Activated CD8-positive, alpha-beta memory T cell treated with anti-CD3 and anti-CD28 coated beads, Interleukin-2, amount 10 ng/mL, durations not matched to agents 7 days and 5 days (primary cell): ENCODE measurements at regions of chr11 and their contacts with region 1.

Region 1: GRCh38 chr11:67317205-67317887 is 14.0 kb downstream of the SSH3 start:
- DNase-seq: peak; percentile 99
- ATAC-seq: peak; percentile 90
- H3K4me3 Mint-ChIP-seq: peak overlapping the region; percentile 90
- H3K27ac Mint-ChIP-seq: peak overlapping the region; percentile 98
- H3K4me1 Mint-ChIP-seq: peaks cover 27% of the 10 kb centered on the region
- H3K27me3 Mint-ChIP-seq: peaks cover 9% of the 10 kb centered on the region

Region 2: DNA sequence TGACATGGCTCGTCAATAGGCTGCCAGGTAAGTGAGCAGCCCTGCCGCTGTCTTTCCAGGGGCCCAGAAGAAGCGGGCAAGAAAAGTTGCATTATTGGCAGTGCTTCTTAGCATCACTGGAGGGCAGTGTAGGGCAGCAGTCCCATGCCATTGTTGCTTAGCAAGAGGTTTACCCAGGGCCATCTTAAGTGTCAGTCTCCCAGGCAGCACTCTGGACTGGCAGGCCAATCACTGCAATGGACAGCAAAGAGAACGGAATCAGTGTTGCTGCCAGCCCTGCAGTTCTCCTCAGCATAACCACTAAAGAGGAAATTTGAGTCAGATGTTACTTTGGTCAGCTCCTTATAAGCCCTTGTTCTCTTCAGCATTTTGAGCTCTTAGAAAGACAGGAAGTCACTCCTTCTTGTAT is 64.5 kb before region 1 on chr11:
- CTCF ChIA-PET with region 1: interaction called, 18 read pairs
- DNase-seq: peak; percentile 73
- ATAC-seq: peak; percentile 85
- H3K4me3 Mint-ChIP-seq: no peak overlapping the region
- H3K27ac Mint-ChIP-seq: peak overlapping the region; percentile 58
- H3K4me1 Mint-ChIP-seq: peaks cover 61% of the 10 kb centered on the region
- H3K27me3 Mint-ChIP-seq: no peaks in the 10 kb centered on the region

Region 3: DNA sequence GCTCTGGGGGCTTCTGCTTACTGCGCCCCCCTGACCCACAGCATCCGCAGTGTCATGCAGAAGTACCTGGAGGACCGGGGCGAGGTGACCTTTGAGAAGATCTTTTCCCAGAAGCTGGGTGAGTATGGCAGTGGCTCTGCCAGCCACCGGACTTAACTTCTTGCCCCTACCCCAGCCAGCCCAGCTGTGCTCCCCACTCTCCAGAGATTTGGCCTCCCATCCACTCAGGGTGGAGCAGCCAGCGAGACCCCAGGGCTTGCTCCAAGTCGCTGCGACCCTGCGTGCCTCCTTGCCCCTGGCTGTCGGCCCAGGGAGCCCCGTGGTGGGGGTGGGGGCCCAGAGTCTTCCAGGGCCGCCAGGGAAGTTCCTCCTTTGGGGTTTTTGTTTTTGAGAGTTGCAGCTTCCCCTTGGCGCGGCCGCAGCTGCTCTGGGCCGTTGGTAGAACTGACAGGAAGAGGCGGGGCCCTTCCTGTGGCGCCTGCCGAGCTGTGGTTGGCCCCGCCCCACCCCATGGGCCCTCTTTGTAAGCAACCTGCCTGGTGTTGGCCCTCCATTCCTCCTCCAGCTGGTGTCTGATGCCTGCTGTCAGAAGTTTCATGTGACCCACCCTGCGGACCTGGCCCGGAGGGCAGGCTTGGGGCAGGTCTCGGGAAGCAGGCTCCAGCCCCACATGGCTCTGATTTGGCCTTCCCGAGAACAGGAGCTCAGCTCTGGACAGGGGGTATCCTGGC is 40.0 kb before region 1 on chr11:
- CTCF ChIA-PET with region 1: interaction called, 29 read pairs
- DNase-seq: peak; percentile 95
- ATAC-seq: peak; percentile 86
- H3K4me3 Mint-ChIP-seq: peak overlapping the region; percentile 57
- H3K27ac Mint-ChIP-seq: peak overlapping the region; percentile 86
- H3K4me1 Mint-ChIP-seq: peaks cover 78% of the 10 kb centered on the region
- H3K27me3 Mint-ChIP-seq: no peaks in the 10 kb centered on the region

Region 4: DNA sequence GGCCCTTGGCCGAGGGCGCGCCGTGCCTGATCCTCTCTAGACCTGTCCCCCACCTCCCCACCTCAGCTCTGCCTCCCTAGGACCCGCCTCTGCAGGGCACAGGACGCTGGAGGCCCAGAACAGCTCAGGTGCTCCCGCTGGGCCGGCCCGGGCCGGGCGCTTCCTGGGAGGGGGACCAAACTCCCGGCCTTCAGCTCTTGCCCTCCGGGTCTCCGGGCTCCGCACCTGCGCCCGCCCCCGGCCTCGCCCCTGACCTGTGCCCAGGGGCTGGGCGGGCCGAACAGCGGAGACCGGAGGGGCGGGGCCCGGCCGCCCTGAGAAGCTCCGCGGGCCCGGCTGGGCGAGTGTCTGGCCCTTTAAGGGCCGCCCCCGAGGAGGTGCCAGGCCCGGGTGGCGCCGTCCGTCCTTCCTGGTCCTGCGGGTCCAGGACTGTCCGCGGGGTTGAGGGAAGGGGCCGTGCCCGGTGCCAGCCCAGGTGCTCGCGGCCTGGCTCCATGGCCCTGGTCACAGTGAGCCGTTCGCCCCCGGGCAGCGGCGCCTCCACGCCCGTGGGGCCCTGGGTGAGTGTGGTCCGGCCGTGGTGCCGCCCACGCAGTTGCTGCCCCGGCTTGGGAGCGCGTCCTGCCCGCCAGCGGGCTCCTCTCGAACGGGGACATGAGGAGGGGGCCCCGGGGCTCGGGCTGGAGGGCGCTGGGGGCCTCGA is 14.1 kb before region 1 on chr11 and contains the start of gene SSH3:
- CTCF ChIA-PET with region 1: interaction called, 29 read pairs
- DNase-seq: peak; percentile 67
- ATAC-seq: peak; percentile 92
- H3K4me3 Mint-ChIP-seq: peak within 1 kb of the TSS; percentile 69
- H3K27ac Mint-ChIP-seq: peak within 1 kb of the TSS; percentile 24
- H3K4me1 Mint-ChIP-seq: peaks cover 12% of the 10 kb centered on the region
- H3K27me3 Mint-ChIP-seq: no peaks in the 10 kb centered on the region
- total RNA-seq, gene SSH3: 10.7 to 26.4 TPM

Region 5: GRCh38 chr11:67382276-67383136 is 65.2 kb after region 1 on chr11:
- CTCF ChIA-PET with region 1: interaction called, 36 read pairs
- DNase-seq: peak; percentile 90
- ATAC-seq: peak; percentile 94
- H3K4me3 Mint-ChIP-seq: no peak overlapping the region
- H3K27ac Mint-ChIP-seq: no peak overlapping the region
- H3K4me1 Mint-ChIP-seq: peaks cover 5% of the 10 kb centered on the region
- H3K27me3 Mint-ChIP-seq: peaks cover 38% of the 10 kb centered on the region

Region 6: GRCh38 chr11:67420646-67421420 is 103.5 kb after region 1 on chr11:
- CTCF ChIA-PET with region 1: no interaction called
- DNase-seq: peak; percentile 98
- ATAC-seq: peak; percentile 93
- H3K4me3 Mint-ChIP-seq: peak overlapping the region; percentile 63
- H3K27ac Mint-ChIP-seq: peak overlapping the region; percentile 81
- H3K4me1 Mint-ChIP-seq: peaks cover 43% of the 10 kb centered on the region
- H3K27me3 Mint-ChIP-seq: peaks cover 7% of the 10 kb centered on the region

Region 7: GRCh38 chr11:67431346-67432249 is 114.3 kb after region 1 on chr11:
- CTCF ChIA-PET with region 1: no interaction called
- DNase-seq: no peak
- ATAC-seq: no peak
- H3K4me3 Mint-ChIP-seq: no peak overlapping the region
- H3K27ac Mint-ChIP-seq: peak overlapping the region; percentile 41
- H3K4me1 Mint-ChIP-seq: peaks cover 68% of the 10 kb centered on the region
- H3K27me3 Mint-ChIP-seq: no peaks in the 10 kb centered on the region

Region 8: DNA sequence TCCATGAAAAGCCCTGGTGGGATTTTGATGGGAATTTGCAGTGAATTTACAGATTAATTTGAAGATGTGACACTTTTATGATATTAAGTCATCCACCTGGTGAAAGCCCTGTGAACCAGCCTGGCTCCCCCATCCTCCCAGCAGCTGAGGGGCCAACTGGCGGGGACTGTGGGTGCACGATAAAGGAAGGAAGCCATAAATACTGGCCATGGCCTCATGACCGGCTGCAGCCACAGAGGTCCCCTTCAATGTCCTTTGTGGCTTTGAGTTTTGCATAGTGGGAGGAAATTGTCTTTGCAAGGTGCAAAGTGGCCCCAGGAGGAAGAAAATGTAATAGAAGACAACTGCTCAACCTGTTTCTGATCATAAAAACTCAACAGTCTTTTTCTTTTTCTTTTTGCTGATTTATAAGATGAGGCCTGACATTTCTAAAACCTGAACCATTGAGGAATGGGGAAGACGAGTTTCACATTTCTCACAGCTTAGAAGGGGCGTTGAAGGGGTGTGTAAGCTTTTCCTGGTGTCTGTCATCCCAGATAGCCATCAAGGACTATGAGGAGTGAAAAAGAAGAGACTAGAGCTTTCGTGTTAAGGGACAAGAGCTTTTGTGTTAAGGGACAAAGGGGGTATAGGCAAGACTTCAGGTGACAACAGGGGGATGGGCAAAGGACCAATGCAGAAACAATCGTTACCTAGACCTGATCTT is 283.1 kb after region 1 on chr11:
- CTCF ChIA-PET with region 1: no interaction called
- DNase-seq: peak; percentile 63
- ATAC-seq: peak; percentile 61
- H3K4me3 Mint-ChIP-seq: no peak overlapping the region
- H3K27ac Mint-ChIP-seq: peak overlapping the region; percentile 65
- H3K4me1 Mint-ChIP-seq: peaks cover 21% of the 10 kb centered on the region
- H3K27me3 Mint-ChIP-seq: peaks cover 25% of the 10 kb centered on the region